Gastrocnemius medialis (tissue), 4 donors: ENCODE measurements at regions of chr5 and their contacts with region 1.

Region 1: DNA sequence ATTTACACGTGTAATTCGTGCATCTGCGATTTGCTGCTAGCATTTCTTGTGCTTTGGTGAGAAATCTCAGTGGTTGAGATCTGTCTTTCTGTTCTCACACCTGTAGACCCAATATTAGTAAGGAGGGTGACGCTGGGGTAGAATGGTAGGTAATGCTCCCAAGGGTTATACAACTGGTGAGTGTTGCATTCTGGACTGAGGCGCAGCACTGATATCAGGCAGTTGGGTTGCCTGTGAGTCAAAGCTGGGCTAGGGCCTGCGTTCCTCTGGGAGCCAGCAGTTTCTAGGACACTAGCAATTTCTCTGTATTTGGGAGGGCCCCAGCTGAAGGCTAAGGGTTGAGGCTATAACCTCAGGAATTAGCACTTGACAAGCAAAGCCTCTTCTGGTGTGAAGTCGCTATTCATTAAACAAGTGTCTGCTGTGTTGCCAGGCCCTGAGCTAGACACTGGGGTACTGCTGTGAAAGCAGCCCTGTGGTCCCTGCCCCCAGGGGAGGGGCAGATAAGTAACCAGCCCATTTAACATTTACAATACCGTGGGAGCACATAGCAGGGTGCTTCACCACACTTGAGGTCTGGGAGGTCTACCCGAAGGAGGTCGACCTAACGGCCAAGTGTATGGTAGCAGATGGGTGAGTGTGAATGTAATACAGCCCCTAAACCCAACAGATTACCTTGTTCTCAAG is 28.7 kb downstream of the LARP1 start:
- DNase-seq: no peak
- ATAC-seq: no peak
- H3K4me3 ChIP-seq: no peak overlapping the region
- H3K27ac ChIP-seq: peak overlapping the region; percentile 75 to 81 (median 77)
- H3K4me1 ChIP-seq: peaks cover 86 to 98% of the 10 kb centered on the region in 2 donors
- H3K27me3 ChIP-seq: no peaks in the 10 kb centered on the region
- CTCF ChIP-seq: no peak
- POLR2A ChIP-seq: no peak

Region 2: DNA sequence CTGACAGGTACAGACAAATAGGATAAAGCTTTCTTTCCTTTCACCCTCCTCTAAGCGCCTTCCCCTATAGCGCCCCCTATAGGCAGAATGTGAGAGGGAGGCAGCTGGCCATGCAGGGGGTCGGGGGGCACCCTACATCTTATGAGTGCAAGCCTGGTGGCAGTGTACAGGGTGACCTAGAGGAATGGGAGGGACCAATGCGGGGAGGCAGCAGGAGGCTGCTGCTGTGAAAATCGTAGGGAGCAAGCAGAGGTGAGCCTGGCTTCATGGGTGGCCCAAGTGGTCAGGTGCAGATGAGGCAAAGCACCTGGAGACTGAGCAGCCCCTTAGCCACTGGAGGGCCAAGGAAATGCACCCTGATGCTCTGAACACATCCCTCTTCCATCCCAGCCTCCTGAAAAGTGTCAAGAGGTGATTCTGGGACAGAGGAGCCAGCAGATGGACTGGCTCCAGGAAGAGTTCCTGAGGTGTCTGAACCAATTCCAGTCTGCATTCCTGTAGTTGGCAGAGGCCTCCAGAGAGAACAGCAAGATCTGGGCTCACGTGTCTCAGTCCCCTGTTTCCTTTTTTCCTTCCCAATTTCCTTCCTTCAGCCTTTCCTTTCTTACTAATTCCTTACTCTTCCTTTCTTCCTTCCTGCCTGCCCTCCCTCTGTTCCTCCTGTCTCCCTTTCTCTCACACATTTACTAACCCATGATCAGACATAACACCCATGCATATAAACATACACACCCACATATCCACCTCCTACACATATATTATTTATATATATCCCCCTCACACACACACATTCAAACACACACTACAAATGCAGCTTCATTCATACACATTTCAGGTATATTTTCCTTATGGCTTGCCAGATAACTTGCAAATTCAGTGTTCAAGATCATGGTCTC is 626.2 kb before region 1 on chr5:
- in situ Hi-C with region 1: no loop called
- intact Hi-C with region 1: no loop called
- DNase-seq: no peak
- ATAC-seq: no peak
- H3K4me3 ChIP-seq: no peak overlapping the region
- H3K27ac ChIP-seq: no peak overlapping the region
- H3K4me1 ChIP-seq: no peaks in the 10 kb centered on the region
- H3K27me3 ChIP-seq: no peaks in the 10 kb centered on the region
- CTCF ChIP-seq: no peak
- POLR2A ChIP-seq: no peak

Region 3: GRCh38 chr5:154683101-154683880 is 100.6 kb before region 1 on chr5:
- in situ Hi-C with region 1: no loop called
- intact Hi-C with region 1: loop called (anchors 1 kb)
- DNase-seq: no peak
- ATAC-seq: peak; percentile 32 to 42
- H3K4me3 ChIP-seq: peak overlapping the region; percentile 64 to 71 (median 68)
- H3K27ac ChIP-seq: peak overlapping the region; percentile 92 to 95 (median 95)
- H3K4me1 ChIP-seq: peaks cover 15 to 34% of the 10 kb centered on the region in 2 donors
- H3K27me3 ChIP-seq: no peaks in the 10 kb centered on the region
- CTCF ChIP-seq: no peak
- POLR2A ChIP-seq: no peak

Region 4: DNA sequence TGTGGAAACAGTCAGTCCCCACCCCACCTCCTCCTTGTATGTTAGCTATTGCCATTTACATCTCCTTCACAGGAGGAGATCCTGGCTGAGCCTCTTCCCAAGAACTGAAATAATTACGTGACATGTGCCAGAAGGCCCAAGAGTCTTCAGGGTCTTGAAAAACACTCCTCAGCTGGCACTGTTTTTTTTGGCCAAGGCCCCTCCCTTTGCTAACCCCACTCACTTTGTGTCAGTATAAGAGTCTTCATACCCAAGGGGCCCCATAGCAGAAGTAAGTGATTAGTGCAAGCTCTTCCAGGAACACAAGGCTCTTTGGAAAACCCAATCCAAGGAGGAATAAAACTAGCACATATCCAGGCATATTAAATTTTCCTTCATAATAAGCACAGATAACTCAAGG is 34.4 kb before region 1 on chr5:
- in situ Hi-C with region 1: no loop called
- intact Hi-C with region 1: no loop called
- DNase-seq: no peak
- ATAC-seq: no peak
- H3K4me3 ChIP-seq: no peak overlapping the region
- H3K27ac ChIP-seq: no peak overlapping the region
- H3K4me1 ChIP-seq: peaks cover 17 to 22% of the 10 kb centered on the region in 2 donors
- H3K27me3 ChIP-seq: no peaks in the 10 kb centered on the region
- CTCF ChIP-seq: no peak
- POLR2A ChIP-seq: no peak

Region 5: DNA sequence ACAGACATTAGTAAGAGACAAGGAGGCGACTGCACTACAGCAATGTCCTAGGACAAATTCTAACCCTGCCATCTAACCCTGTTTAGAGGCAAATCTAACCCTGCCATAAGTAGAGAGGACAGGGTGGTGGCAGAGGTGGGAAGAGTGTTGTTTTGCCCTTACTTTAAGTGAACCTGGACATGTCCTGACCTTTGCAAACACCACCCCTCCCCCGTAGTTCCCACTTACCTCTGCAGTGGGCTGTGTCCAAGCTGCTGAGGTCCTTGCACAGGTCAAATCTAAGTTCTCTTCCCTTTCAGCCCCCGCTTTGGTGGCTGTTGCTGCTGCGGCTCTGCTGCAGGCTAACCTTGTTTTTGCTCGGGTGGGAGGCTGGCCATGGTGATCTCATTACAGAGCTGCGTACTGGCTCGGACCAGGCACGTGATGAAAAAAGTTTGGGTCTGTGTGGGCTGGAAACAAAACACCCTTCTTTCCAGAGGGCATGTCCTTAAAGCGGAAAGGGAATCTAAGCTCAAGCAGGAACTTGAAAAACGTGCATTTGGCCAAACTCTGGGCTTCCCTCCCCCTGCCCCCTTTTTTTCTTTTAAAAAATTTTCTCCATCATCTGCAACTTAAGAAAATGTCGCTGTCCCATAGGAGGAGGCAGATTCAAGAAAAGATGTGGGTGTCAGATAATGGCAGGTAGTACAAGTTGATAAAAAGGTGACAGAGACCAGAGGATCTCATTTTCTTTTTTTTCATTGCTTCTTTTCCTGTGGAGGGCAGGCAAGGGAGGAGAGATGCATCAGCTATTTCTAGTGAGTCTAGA is 66.5 kb after region 1 on chr5 and contains the start of gene FAXDC2:
- in situ Hi-C with region 1: no loop called
- intact Hi-C with region 1: loop called (anchors 1 kb)
- DNase-seq: peak; percentile 78 to 79
- ATAC-seq: peak; percentile 94 to 97
- H3K4me3 ChIP-seq: peak within 1 kb of the TSS; percentile 47 to 65 (median 56)
- H3K27ac ChIP-seq: peak within 1 kb of the TSS; percentile 61 to 84 (median 77)
- H3K4me1 ChIP-seq: peaks cover 26 to 27% of the 10 kb centered on the region in 2 donors
- H3K27me3 ChIP-seq: no peaks in the 10 kb centered on the region
- CTCF ChIP-seq: no peak
- POLR2A ChIP-seq: peak in 1 of 2 donors; percentile 42
- total RNA-seq, gene FAXDC2: 4.4 to 12.5 (median 6.4) TPM

Region 6: GRCh38 chr5:154865466-154866162 is 81.7 kb after region 1 on chr5:
- in situ Hi-C with region 1: no loop called
- intact Hi-C with region 1: no loop called
- DNase-seq: no peak
- ATAC-seq: no peak
- H3K4me3 ChIP-seq: no peak overlapping the region
- H3K27ac ChIP-seq: no peak overlapping the region
- H3K4me1 ChIP-seq: peaks cover 18 to 25% of the 10 kb centered on the region in 2 donors
- H3K27me3 ChIP-seq: no peaks in the 10 kb centered on the region
- CTCF ChIP-seq: no peak
- POLR2A ChIP-seq: no peak

Region 7: GRCh38 chr5:155767470-155767869 is 983.6 kb after region 1 on chr5:
- in situ Hi-C with region 1: no loop called
- intact Hi-C with region 1: loop called (anchors 5 kb)
- DNase-seq: no peak
- ATAC-seq: peak; percentile 64 to 69
- H3K4me3 ChIP-seq: no peak overlapping the region
- H3K27ac ChIP-seq: peak overlapping the region in 2 of 4 donors; percentile 52 to 53
- H3K4me1 ChIP-seq: peaks cover 6 to 10% of the 10 kb centered on the region in 2 donors
- H3K27me3 ChIP-seq: no peaks in the 10 kb centered on the region
- CTCF ChIP-seq: no peak
- POLR2A ChIP-seq: no peak